Heart right ventricle (tissue), 16 donors: ENCODE measurements at regions of chr2 and their contacts with region 1.

Region 1: GRCh38 chr2:101697124-101698013 is at the start of gene MAP4K4:
- DNase-seq: peak; percentile 88 to 91
- ATAC-seq: peak; percentile 85 to 92 (median 88)
- H3K4me3 ChIP-seq: peak within 1 kb of the TSS; percentile 53 to 81 (median 73)
- H3K27ac ChIP-seq: peak within 1 kb of the TSS; percentile 79 to 95 (median 92)
- H3K4me1 ChIP-seq: peaks cover 0 to 47% (median 27%) of the 10 kb centered on the region in 9 donors
- H3K27me3 ChIP-seq: no peaks in the 10 kb centered on the region
- CTCF ChIP-seq: peak in 7 of 9 donors; percentile 21 to 66 (median 51)
- total RNA-seq, gene MAP4K4: 74.5 to 116 (median 96.0) TPM

Region 2: GRCh38 chr2:101295895-101296294 is 401.5 kb before region 1 on chr2:
- intact Hi-C with region 1: no loop called
- DNase-seq: no peak
- ATAC-seq: no peak
- H3K4me3 ChIP-seq: no peak overlapping the region
- H3K27ac ChIP-seq: no peak overlapping the region
- H3K4me1 ChIP-seq: peaks cover 4 to 85% (median 20%) of the 10 kb centered on the region in 9 donors
- H3K27me3 ChIP-seq: no peaks in the 10 kb centered on the region
- CTCF ChIP-seq: no peak

Region 3: GRCh38 chr2:101435001-101435862 is 262.1 kb before region 1 on chr2:
- intact Hi-C with region 1: loop called in 1 of 10 experiments (anchors 10 kb)
- DNase-seq: peak; percentile 27 to 31
- ATAC-seq: peak; percentile 44 to 72 (median 51)
- H3K4me3 ChIP-seq: peak overlapping the region in 7 of 10 donors; percentile 23 to 46 (median 32)
- H3K27ac ChIP-seq: peak overlapping the region in 6 of 10 donors; percentile 9 to 67 (median 48)
- H3K4me1 ChIP-seq: peaks cover 0 to 30% (median 18%) of the 10 kb centered on the region in 9 donors
- H3K27me3 ChIP-seq: peaks cover 0 to 18% (median 0%) of the 10 kb centered on the region in 7 donors
- CTCF ChIP-seq: no peak

Region 4: GRCh38 chr2:101558740-101559519 is 138.4 kb before region 1 on chr2:
- intact Hi-C with region 1: loop called in 2 of 10 experiments (anchors 1 to 10 kb)
- DNase-seq: peak in 1 of 2 donors; percentile 47
- ATAC-seq: peak; percentile 76 to 90 (median 87)
- H3K4me3 ChIP-seq: peak overlapping the region in 6 of 10 donors; percentile 7 to 30 (median 10)
- H3K27ac ChIP-seq: peak overlapping the region; percentile 65 to 88 (median 80)
- H3K4me1 ChIP-seq: peaks cover 5 to 28% (median 19%) of the 10 kb centered on the region in 9 donors
- H3K27me3 ChIP-seq: no peaks in the 10 kb centered on the region
- CTCF ChIP-seq: no peak

Region 5: DNA sequence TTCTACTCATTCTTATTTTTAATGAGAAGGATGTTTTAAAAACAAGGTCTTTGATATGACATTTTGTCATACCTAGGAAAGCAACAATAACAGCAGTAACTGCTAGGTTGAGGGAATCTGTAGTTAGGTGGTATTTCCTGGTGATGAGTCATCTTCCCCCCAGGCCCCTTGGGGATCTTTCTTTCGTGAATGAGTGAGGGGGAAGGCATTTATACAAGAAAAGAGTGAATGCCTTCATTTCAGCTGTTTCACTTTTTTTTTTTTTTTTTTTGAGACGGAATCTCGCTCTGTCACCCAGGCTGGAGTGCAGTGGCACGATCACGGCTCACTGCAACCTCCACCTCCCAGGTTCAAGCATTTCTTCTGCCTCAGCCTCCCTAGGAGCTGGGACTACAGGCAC is 108.8 kb after region 1 on chr2:
- intact Hi-C with region 1: loop called in 1 of 10 experiments (anchors 5 kb)
- DNase-seq: no peak
- ATAC-seq: peak in 5 of 8 donors; percentile 10 to 63 (median 55)
- H3K4me3 ChIP-seq: peak overlapping the region in 2 of 10 donors; percentile 4 to 19
- H3K27ac ChIP-seq: peak overlapping the region in 9 of 10 donors; percentile 28 to 75 (median 51)
- H3K4me1 ChIP-seq: peaks cover 17 to 96% (median 64%) of the 10 kb centered on the region in 9 donors
- H3K27me3 ChIP-seq: no peaks in the 10 kb centered on the region
- CTCF ChIP-seq: no peak

Region 6: GRCh38 chr2:101831351-101831865 is 134.0 kb after region 1 on chr2:
- intact Hi-C with region 1: loop called in 8 of 10 experiments (anchors 2 to 10 kb)
- DNase-seq: peak; percentile 59 to 86
- ATAC-seq: peak; percentile 65 to 89 (median 86)
- H3K4me3 ChIP-seq: no peak overlapping the region
- H3K27ac ChIP-seq: peak overlapping the region in 9 of 10 donors; percentile 8 to 71 (median 62)
- H3K4me1 ChIP-seq: peaks cover 18 to 57% (median 54%) of the 10 kb centered on the region in 9 donors
- H3K27me3 ChIP-seq: no peaks in the 10 kb centered on the region
- CTCF ChIP-seq: peak; percentile 56 to 90 (median 77)